Mammary epithelial cell (primary cell): ENCODE measurements at regions of chr12 and their contacts with region 1.

Region 1: DNA sequence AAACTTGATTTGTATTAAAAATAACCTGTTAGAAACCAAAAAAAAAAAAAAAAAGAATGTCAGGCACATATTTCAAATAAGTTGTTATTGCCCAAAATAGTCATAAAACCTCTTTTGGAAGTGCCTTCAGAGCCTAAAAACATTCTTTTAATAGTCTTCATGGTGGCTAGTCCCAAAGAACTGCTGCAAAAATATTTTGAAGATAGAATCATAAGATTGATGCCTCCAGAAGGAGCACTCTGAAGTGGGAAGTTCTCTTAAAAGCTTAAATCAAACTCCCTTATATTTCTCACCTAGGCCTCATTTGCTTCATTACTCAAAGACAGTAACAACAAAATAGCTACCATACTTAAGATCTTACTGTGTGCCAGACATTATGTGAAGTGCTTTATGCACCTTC is 27.2 kb upstream of the NT5DC3 start:
- DNase-seq: no peak
- H3K4me3 ChIP-seq: no peak overlapping the region
- H3K27ac ChIP-seq: no peak overlapping the region
- H3K4me1 ChIP-seq: peaks cover 25% of the 10 kb centered on the region
- H3K27me3 ChIP-seq: no peaks in the 10 kb centered on the region
- CTCF ChIP-seq: no peak

Region 2: DNA sequence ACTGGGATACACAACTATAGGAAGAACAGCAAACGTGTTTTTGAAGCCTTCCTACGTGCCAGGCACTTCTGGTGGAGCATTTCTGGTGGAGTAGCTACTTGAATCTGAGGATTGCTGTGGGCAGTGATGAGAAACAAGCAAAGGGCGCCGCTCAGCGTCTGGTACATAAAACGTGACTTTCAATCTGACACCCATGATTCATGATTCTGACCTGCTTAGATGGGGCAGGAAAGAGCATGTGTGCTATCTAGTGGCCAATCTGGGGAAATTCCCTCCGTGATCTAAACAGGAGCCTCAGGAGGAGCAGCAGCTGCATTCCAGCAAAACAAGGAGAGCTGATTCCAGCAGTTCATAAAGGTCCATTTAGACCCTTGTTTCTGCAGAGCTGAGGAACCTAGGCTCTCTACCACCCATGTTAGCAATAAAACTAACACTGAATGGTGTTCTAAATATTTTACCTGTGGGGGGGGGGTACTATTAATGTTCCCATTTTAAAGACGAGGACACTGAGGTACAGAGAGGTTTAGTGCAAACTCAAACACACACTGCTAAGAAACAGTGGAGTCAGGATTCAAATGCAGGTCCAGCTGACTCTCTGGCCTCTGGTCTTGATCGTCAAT is 989.0 kb before region 1 on chr12:
- CTCF ChIA-PET with region 1: no interaction called
- dilution Hi-C with region 1: no loop called
- in situ Hi-C with region 1: no loop called
- intact Hi-C with region 1: loop called (anchors 5 kb)
- DNase-seq: peak; percentile 79
- H3K4me3 ChIP-seq: no peak overlapping the region
- H3K27ac ChIP-seq: no peak overlapping the region
- H3K4me1 ChIP-seq: no peaks in the 10 kb centered on the region
- H3K27me3 ChIP-seq: peaks cover 2% of the 10 kb centered on the region
- CTCF ChIP-seq: peak; percentile 46 to 57

Region 3: DNA sequence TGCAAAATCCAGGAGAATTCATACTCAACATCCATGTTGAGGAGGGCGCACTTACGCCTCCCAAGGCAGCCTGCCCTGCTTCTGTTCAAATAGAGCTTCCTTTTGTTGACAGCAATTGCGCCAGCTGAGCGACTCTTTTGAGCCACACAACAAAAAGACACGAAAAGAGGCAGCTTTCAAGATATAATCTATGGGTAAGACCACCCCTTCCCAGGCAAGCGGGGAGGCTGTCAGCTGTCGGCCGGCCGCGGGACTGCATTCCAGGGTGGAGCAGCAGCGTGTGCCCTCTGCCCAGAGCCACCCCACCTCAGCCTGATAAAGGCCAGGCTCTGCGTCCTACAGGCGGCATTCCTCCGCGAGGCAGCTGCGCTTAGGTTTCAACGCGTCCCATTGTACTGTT is 296.9 kb before region 1 on chr12:
- CTCF ChIA-PET with region 1: no interaction called
- dilution Hi-C with region 1: no loop called
- in situ Hi-C with region 1: loop called in 1 of 2 experiments (anchors 25 kb)
- intact Hi-C with region 1: loop called (anchors 2 kb)
- DNase-seq: no peak
- H3K4me3 ChIP-seq: no peak overlapping the region
- H3K27ac ChIP-seq: no peak overlapping the region
- H3K4me1 ChIP-seq: peaks cover 12% of the 10 kb centered on the region
- H3K27me3 ChIP-seq: no peaks in the 10 kb centered on the region
- CTCF ChIP-seq: no peak

Region 4: DNA sequence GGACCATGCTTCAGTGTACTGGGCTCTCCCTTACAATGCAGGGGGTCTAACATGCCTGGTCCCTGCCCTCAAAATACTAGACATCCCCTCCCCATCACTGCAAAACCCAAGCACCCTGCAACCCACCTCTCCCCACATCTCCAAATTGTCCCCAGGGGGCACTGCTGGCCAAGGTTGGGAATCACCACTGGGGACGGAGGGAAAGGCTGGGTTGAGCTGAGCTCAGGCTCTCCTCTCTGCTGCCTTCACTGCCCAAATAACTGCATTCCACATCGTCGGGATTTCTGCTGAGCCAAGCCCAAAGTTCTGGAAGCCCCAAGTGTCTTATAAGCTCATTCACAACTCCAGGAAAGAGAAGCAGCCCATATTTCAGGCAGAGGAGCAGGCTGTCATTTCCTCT is 96.7 kb before region 1 on chr12:
- CTCF ChIA-PET with region 1: no interaction called
- dilution Hi-C with region 1: loop called (anchors 5 kb)
- in situ Hi-C with region 1: no loop called
- intact Hi-C with region 1: loop called (anchors 1 kb)
- DNase-seq: no peak
- H3K4me3 ChIP-seq: no peak overlapping the region
- H3K27ac ChIP-seq: no peak overlapping the region
- H3K4me1 ChIP-seq: no peaks in the 10 kb centered on the region
- H3K27me3 ChIP-seq: no peaks in the 10 kb centered on the region
- CTCF ChIP-seq: peak; percentile 21 to 50

Region 5: GRCh38 chr12:103801709-103802585 is 66.3 kb before region 1 on chr12:
- CTCF ChIA-PET with region 1: no interaction called
- dilution Hi-C with region 1: no loop called
- in situ Hi-C with region 1: no loop called
- intact Hi-C with region 1: loop called (anchors 2 kb)
- DNase-seq: peak; percentile 100
- H3K4me3 ChIP-seq: peak overlapping the region in 1 of 3 experiments; percentile 2
- H3K27ac ChIP-seq: peak overlapping the region; percentile 96
- H3K4me1 ChIP-seq: peaks cover 80% of the 10 kb centered on the region
- H3K27me3 ChIP-seq: no peaks in the 10 kb centered on the region
- CTCF ChIP-seq: no peak